ENCODE measurements at regions of chr1 and their contacts with region 1.

Region 1: GRCh38 chr1:78676347-78676982 is 26.8 kb downstream of the IFI44 start:
- DNase-seq: no peak
- ATAC-seq: peak; percentile 69
- H3K4me3 ChIP-seq: no peak overlapping the region
- H3K27ac ChIP-seq: no peak overlapping the region
- H3K4me1 ChIP-seq: no peaks in the 10 kb centered on the region
- H3K27me3 ChIP-seq: no peaks in the 10 kb centered on the region
- CTCF ChIP-seq: peak; percentile 88

Region 2: GRCh38 chr1:78617615-78618026 is 58.8 kb before region 1 on chr1:
- intact Hi-C with region 1: loop called (anchors 10 kb)
- DNase-seq: peak; percentile 71
- ATAC-seq: peak; percentile 97
- H3K4me3 ChIP-seq: no peak overlapping the region
- H3K27ac ChIP-seq: no peak overlapping the region
- H3K4me1 ChIP-seq: peaks cover 9% of the 10 kb centered on the region
- H3K27me3 ChIP-seq: no peaks in the 10 kb centered on the region
- CTCF ChIP-seq: peak; percentile 89

Region 3: DNA sequence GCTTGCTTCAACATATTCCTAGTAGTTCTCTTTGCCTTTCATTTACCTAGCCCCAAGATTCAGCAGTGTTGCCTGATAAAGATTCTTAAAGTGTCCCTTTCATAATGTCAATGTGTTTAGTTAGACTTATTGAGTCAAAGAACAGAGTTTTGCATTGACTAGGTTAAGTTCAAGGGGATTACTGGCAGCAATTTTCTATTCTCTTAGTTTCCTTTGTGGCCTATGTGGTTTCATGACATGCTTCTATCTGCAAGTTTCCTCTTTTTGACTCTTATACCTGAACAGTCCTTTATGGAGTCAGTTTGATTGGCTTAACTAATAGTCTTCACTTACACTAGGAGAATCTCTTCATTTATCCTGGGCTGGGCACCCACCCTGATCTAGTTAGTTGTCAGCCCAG is 178.8 kb after region 1 on chr1:
- intact Hi-C with region 1: no loop called
- DNase-seq: no peak
- ATAC-seq: no peak
- H3K4me3 ChIP-seq: no peak overlapping the region
- H3K27ac ChIP-seq: no peak overlapping the region
- H3K4me1 ChIP-seq: no peaks in the 10 kb centered on the region
- H3K27me3 ChIP-seq: no peaks in the 10 kb centered on the region
- CTCF ChIP-seq: no peak